Endothelial cell of umbilical vein (primary cell): ENCODE measurements at regions of chr6 and their contacts with region 1.

Region 1: DNA sequence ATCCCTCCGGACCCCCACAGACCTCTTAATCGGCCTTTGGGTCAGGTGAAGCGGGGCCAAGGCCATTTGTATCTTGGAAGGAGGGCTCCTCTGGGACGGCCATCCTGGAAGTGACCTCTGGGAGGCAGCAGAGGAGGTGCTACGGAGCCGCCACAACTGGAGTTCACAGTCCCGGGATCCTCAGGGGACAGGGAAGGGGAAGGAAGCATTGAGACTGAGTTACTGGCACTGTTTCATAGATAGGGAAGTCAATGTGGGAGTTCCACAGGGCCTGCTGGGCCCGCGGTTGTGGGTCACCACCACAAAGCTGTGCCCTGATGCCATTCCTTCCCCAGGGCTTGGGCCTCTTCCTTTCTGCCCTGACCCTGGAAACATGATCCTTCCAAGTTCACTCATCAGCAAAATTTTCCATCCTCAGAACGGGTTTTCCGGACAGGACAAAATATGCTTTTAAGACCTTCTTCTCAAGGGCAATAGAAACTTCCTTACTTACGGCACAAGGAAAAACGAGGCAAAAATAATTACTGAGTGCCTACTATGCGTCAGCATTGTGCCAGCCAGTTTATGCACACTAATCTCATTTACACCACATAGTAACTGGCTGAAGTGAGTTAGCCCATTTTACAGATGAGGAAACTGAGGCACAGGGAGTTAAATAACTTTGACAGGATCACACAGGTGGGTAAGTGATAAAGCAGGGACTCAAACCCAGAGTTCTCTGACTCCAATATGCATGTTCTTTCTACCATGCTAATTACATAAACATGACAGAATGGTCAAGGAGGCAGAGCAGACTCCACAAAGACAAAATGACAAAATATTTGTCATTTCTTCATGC is 143.8 kb downstream of the UNC5CL start:
- DNase-seq: peak; percentile 68
- H3K4me3 ChIP-seq: no peak overlapping the region
- H3K27ac ChIP-seq: no peak overlapping the region
- H3K4me1 ChIP-seq: peaks cover 8% of the 10 kb centered on the region
- H3K27me3 ChIP-seq: no peaks in the 10 kb centered on the region
- CTCF ChIP-seq: peak; percentile 65 to 69
- POLR2A ChIP-seq: no peak

Region 2: DNA sequence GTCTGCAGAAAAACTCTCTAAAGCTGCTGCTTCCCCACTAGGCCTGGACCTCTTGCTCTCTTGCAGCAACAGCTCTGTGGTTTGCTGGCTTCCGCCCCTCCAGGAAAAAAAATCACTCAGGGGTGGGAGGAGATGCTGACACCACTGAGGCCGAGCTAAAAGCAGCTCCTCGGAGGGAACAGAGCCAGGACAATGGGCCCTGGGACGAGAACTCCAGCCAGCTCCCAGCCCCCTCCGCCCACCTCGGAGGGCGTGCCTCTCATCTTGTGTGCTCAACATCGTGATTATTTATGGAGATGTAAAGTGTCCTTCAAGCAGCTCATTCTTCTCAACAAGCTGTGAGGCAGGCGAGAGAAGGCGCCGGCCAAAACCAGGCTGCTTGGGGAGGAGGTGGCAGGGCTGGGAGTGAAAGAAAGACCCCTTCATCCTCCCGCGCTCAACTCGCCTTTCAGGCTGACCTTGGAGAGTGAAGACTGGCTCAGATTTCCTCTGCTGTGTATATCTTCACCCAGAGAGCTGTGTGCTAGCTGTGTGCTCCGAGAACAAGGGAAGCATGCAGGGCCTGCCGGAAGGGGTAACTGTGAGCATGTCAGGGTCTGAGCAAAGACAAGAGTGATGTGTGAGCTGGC is 254.5 kb before region 1 on chr6:
- CTCF ChIA-PET with region 1: no interaction called
- POLR2A ChIA-PET with region 1: no interaction called
- dilution Hi-C with region 1: no loop called
- intact Hi-C with region 1: no loop called
- DNase-seq: no peak
- H3K4me3 ChIP-seq: no peak overlapping the region
- H3K27ac ChIP-seq: no peak overlapping the region
- H3K4me1 ChIP-seq: no peaks in the 10 kb centered on the region
- H3K27me3 ChIP-seq: no peaks in the 10 kb centered on the region
- CTCF ChIP-seq: no peak
- POLR2A ChIP-seq: no peak

Region 3: DNA sequence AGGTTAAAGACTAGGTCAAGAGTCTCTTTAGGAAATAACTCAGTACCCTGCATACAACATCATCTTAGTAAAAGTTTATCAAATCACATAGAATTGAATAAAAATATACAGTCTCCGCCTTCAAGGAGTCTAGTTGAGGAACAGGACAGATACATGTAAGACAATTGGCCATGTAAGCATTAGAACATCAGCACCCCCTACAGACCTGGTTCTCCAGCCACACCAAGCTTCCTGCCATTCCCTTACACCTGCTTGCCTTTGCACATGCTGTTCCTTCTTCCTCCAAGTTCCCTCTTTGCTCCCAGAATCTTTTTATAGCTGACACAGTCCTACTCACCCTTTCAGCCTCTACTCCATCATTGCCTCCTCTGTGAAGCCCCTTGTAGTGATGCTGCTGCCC is 120.2 kb before region 1 on chr6:
- CTCF ChIA-PET with region 1: no interaction called
- POLR2A ChIA-PET with region 1: no interaction called
- dilution Hi-C with region 1: no loop called
- intact Hi-C with region 1: no loop called
- DNase-seq: no peak
- H3K4me3 ChIP-seq: no peak overlapping the region
- H3K27ac ChIP-seq: no peak overlapping the region
- H3K4me1 ChIP-seq: peaks cover 21% of the 10 kb centered on the region
- H3K27me3 ChIP-seq: peaks cover 0 to 2% of the 10 kb centered on the region in 2 experiments
- CTCF ChIP-seq: no peak
- POLR2A ChIP-seq: no peak

Region 4: DNA sequence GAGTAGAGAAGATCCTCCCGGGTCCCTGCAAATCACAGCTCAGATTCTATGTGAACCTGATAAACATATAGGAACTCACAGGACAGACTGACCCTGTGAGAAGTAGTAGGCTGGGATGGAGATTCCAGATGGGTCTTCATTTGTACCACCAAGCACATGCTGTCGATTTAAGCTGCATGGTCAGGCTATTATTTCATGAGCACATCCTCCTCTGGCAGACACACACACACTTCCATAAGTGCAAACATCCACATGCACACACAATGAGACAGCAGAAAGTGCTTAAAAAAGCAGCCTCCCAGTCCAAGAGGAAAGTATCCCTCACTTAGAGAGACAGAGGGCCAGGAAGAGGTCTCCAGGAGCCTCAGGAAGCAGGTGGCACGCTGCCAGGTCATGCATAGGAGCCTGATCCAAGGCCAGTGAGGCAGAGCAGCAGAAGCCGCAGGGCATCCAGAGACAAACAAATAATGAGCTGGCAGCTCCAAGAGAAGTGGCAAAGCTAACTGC is 12.1 kb after region 1 on chr6:
- CTCF ChIA-PET with region 1: interaction called, 35 read pairs
- POLR2A ChIA-PET with region 1: no interaction called
- dilution Hi-C with region 1: no loop called
- intact Hi-C with region 1: loop called (anchors 1 kb)
- DNase-seq: peak; percentile 68
- H3K4me3 ChIP-seq: no peak overlapping the region
- H3K27ac ChIP-seq: peak overlapping the region; percentile 38
- H3K4me1 ChIP-seq: peaks cover 19% of the 10 kb centered on the region
- H3K27me3 ChIP-seq: no peaks in the 10 kb centered on the region
- CTCF ChIP-seq: no peak
- POLR2A ChIP-seq: no peak

Region 5: GRCh38 chr6:40912158-40912946 is 17.2 kb after region 1 on chr6:
- CTCF ChIA-PET with region 1: interaction called, 35 read pairs
- POLR2A ChIA-PET with region 1: no interaction called
- dilution Hi-C with region 1: no loop called
- intact Hi-C with region 1: loop called (anchors 1 kb)
- DNase-seq: peak; percentile 34
- H3K4me3 ChIP-seq: no peak overlapping the region
- H3K27ac ChIP-seq: no peak overlapping the region
- H3K4me1 ChIP-seq: peaks cover 6% of the 10 kb centered on the region
- H3K27me3 ChIP-seq: peaks cover 0 to 3% of the 10 kb centered on the region in 2 experiments
- CTCF ChIP-seq: peak; percentile 35 to 51
- POLR2A ChIP-seq: no peak

Region 6: GRCh38 chr6:40918040-40918655 is 23.0 kb after region 1 on chr6:
- CTCF ChIA-PET with region 1: interaction called, 35 read pairs
- POLR2A ChIA-PET with region 1: no interaction called
- dilution Hi-C with region 1: no loop called
- intact Hi-C with region 1: no loop called
- DNase-seq: no peak
- H3K4me3 ChIP-seq: no peak overlapping the region
- H3K27ac ChIP-seq: no peak overlapping the region
- H3K4me1 ChIP-seq: no peaks in the 10 kb centered on the region
- H3K27me3 ChIP-seq: peaks cover 2 to 3% of the 10 kb centered on the region in 2 experiments
- CTCF ChIP-seq: no peak
- POLR2A ChIP-seq: no peak

Region 7: DNA sequence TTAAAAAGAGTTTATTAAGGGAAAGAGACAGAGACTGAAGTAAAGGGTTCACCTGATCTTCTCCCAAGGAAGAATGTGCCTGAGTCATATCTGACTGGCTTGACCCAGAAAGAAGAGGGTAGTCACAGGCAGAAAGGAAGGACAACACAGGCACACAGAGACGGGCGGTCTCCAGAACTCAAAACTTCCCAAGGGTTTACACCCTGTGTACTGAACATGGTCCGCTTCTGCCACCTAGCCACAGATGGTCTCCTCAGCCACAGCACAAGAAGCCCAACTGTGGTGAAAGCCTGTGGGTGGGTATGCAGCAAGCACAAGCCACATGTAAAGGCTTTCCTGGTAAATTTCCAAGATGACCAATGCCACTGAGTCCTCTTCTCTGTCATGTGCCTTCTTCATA is 126.7 kb after region 1 on chr6:
- CTCF ChIA-PET with region 1: interaction called, 96 read pairs
- POLR2A ChIA-PET with region 1: no interaction called
- dilution Hi-C with region 1: no loop called
- intact Hi-C with region 1: no loop called
- DNase-seq: peak; percentile 37
- H3K4me3 ChIP-seq: no peak overlapping the region
- H3K27ac ChIP-seq: no peak overlapping the region
- H3K4me1 ChIP-seq: no peaks in the 10 kb centered on the region
- H3K27me3 ChIP-seq: peaks cover 0 to 2% of the 10 kb centered on the region in 2 experiments
- CTCF ChIP-seq: peak in 1 of 2 donors; percentile 18
- POLR2A ChIP-seq: no peak

Region 8: GRCh38 chr6:41039060-41039998 is 144.1 kb after region 1 on chr6 and contains the start of gene UNC5CL:
- CTCF ChIA-PET with region 1: interaction called, 12 read pairs
- POLR2A ChIA-PET with region 1: no interaction called
- dilution Hi-C with region 1: no loop called
- intact Hi-C with region 1: no loop called
- DNase-seq: peak; percentile 22
- H3K4me3 ChIP-seq: no peak within 1 kb of the TSS
- H3K27ac ChIP-seq: no peak within 1 kb of the TSS
- H3K4me1 ChIP-seq: peaks cover 2% of the 10 kb centered on the region
- H3K27me3 ChIP-seq: peaks cover 0 to 2% of the 10 kb centered on the region in 2 experiments
- CTCF ChIP-seq: peak; percentile 69 to 71
- POLR2A ChIP-seq: no peak
- total RNA-seq, gene UNC5CL: 0.20 and 0.32 TPM in 2 replicates

Region 9: DNA sequence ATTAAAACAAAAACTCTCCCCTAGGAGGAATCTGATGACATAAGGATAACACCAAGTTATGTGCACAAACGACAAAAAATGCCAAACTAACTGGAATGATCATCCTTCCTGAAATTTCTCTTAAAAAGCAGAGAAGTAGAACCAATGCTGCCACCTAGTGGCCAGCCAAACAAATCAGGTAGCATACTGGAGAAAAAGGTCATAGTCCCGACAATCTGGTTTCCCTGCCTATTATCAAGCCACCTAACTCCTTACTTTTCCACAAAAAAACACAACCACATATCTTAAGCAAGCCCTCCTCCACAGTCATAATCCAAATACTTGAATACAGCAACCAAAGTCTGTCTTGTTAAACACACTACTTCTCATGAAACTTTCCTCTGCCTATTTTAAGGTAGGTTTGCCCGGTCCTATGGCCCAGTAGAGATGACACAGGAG is 171.7 kb after region 1 on chr6:
- CTCF ChIA-PET with region 1: no interaction called
- POLR2A ChIA-PET with region 1: no interaction called
- dilution Hi-C with region 1: no loop called
- intact Hi-C with region 1: loop called (anchors 1 kb)
- DNase-seq: peak; percentile 69
- H3K4me3 ChIP-seq: no peak overlapping the region
- H3K27ac ChIP-seq: no peak overlapping the region
- H3K4me1 ChIP-seq: peaks cover 8% of the 10 kb centered on the region
- H3K27me3 ChIP-seq: no peaks in the 10 kb centered on the region
- CTCF ChIP-seq: peak; percentile 62 to 68
- POLR2A ChIP-seq: no peak

Region 10: GRCh38 chr6:41147917-41148316 is 252.7 kb after region 1 on chr6:
- CTCF ChIA-PET with region 1: no interaction called
- POLR2A ChIA-PET with region 1: no interaction called
- dilution Hi-C with region 1: no loop called
- intact Hi-C with region 1: no loop called
- DNase-seq: no peak
- H3K4me3 ChIP-seq: no peak overlapping the region
- H3K27ac ChIP-seq: no peak overlapping the region
- H3K4me1 ChIP-seq: no peaks in the 10 kb centered on the region
- H3K27me3 ChIP-seq: no peaks in the 10 kb centered on the region
- CTCF ChIP-seq: no peak
- POLR2A ChIP-seq: no peak